Dendritic cell treated with granulocyte-macrophage colony-stimulating factor and Interleukin-4, amounts not matched to agents 40 ng/mL and 50 ng/mL, for 4 days (primary cell): ENCODE measurements at regions of chr10 and their contacts with region 1.

Region 1: GRCh38 chr10:17257466-17258321 is 29.7 kb downstream of the VIM start:
- H3K4me3 Mint-ChIP-seq: peak overlapping the region; percentile 58
- H3K27ac Mint-ChIP-seq: peak overlapping the region; percentile 84
- H3K4me1 Mint-ChIP-seq: peaks cover 10% of the 10 kb centered on the region
- H3K27me3 Mint-ChIP-seq: no peaks in the 10 kb centered on the region

Region 2: GRCh38 chr10:16828114-16828568 is 429.6 kb before region 1 on chr10:
- intact Hi-C with region 1: loop called (anchors 1 kb)
- H3K4me3 Mint-ChIP-seq: no peak overlapping the region
- H3K27ac Mint-ChIP-seq: no peak overlapping the region
- H3K4me1 Mint-ChIP-seq: peaks cover 8% of the 10 kb centered on the region
- H3K27me3 Mint-ChIP-seq: peaks cover 6% of the 10 kb centered on the region

Region 3: DNA sequence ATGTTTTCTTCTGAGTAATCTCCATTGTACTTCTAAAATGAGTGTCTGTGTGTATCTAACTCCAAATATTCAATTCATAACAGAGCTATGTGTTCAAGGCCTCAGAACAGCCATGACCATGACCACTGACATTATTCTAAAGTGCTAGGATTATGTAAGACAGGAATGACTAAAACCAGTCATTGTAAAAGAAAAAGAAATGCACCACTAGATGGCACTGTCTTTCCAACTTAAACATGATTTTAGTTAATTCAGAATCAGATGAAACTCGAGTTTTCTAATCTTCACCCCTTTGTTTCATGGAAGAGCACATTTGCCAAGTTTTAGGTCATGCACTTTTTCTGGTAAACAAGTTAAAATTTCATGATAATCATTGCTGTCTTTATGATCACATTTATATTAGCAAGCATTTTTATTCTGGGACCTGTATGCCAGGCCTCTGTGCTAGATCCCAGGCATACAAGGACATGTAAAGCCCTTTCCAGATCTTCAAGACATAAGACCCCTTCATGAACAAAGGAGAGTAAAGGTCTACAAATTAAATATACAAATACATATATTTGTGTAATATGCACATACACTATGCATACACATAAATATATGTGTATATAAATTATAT is 414.3 kb before region 1 on chr10:
- intact Hi-C with region 1: loop called (anchors 1 kb)
- H3K4me3 Mint-ChIP-seq: no peak overlapping the region
- H3K27ac Mint-ChIP-seq: no peak overlapping the region
- H3K4me1 Mint-ChIP-seq: no peaks in the 10 kb centered on the region
- H3K27me3 Mint-ChIP-seq: no peaks in the 10 kb centered on the region

Region 4: DNA sequence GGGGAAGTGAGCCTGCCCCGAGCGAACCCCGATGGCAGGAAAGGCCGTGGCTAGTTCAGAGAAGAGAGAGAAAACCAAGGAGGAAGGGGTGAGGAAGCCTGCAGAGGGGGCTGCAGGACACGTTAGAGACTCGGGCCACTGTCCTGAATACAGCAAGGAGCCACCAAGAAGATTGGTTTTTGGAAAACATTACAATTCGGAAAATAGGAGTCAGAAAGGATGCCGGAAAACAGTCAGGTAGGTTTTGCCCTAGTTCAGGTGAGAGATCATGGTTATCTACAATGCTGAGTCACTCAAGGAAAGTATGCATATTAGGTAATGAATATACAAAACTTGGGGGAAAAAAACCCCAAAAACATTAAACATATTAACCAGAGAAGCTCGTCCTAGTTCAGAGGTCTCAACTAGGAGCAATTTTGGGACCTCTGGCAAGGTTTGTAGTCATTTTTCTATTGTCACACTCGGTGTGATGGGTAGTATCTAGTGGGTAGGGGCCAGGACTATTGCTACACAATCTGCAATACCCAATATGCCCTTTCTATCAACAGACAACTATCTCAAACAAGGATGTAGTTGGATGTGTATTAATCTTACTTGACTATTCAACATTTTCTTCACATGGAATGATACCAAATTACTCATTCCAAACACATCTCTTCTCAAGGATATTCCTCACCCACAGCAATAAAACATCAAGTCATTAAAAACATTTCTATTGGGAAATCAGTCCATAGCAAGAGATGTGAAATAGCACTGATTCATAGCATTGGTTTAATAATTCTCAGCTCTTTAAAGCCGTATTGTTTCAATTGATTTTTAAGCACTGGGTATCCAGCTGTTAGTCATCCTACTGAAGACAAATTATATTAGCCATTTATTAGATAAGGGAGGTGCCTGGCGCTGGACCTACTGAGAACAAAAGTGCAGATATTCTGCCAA is 366.1 kb before region 1 on chr10:
- intact Hi-C with region 1: loop called (anchors 2 kb)
- H3K4me3 Mint-ChIP-seq: peak overlapping the region; percentile 45
- H3K27ac Mint-ChIP-seq: peak overlapping the region; percentile 11
- H3K4me1 Mint-ChIP-seq: peaks cover 18% of the 10 kb centered on the region
- H3K27me3 Mint-ChIP-seq: peaks cover 5% of the 10 kb centered on the region